ENCODE measurements at regions of chr15 and their contacts with region 1.

Region 1: DNA sequence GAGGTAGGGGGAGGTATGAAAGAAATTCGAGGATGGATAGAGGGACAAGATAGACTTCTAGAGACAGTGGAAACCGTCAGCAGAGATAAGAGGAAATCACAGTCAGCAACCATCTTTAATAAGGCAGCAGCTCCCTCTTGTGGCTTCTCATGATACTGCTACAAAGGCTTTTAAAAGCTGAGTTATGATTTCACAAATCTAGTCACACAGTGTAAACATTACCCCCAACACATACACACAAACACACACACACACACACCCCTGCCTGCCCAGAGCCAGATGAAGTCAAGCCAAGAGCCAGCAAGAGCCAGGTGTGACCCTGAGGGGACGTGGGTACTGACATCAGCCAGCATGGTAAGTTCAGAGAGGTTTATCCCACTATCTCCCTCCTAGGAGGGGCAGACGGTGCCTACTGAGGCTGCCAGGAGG is 18.9 kb upstream of the TGM5 start:
- ATAC-seq: peak; percentile 47 to 88 (median 64)
- H3K4me3 ChIP-seq: no peak overlapping the region
- H3K27ac ChIP-seq: no peak overlapping the region
- H3K4me1 ChIP-seq: no peaks in the 10 kb centered on the region

Region 2: DNA sequence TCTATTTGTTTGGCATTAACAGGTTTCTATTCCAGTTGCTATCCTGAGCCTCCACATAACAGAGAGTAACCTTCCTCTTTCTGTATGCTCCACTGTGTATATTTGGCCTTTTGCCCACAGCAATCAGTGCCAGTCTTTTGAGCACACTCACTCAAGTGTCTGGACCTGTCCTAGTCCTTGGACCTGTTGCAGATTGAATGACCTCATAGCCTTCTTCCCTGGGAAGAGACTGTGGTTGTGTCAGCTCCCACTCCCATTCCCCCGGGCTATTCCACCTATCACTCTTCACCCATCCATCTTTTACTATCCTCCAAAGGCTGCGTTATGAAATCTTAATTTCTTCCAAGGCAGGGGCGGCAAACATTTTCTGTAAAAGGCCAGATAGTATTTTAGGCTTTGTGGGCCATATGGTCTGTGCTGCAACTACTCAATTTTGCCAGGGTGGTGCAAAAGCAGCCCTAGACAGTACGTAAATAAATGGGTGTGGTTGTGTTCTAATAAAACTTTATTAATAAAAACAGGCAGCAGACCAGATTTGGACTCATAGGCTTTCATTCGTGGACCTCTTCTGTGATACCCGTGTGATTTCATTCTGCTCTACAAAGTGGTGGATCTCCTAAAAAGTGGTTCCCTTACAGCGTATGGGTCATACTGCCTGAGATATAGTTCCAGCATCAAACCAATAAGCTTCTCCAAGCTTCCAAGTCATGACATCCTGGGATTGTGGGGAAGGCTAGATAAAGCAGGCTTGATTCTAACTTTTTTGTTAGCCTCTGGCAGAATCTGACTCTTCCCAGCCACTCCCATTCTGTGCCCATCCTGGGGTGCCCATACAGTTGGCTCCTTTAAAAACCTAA is 606.1 kb before region 1 on chr15:
- in situ Hi-C with region 1: loop called in 1 of 9 experiments (anchors 25 kb)
- ATAC-seq: no peak
- H3K4me3 ChIP-seq: no peak overlapping the region
- H3K27ac ChIP-seq: no peak overlapping the region
- H3K4me1 ChIP-seq: no peaks in the 10 kb centered on the region

Region 3: DNA sequence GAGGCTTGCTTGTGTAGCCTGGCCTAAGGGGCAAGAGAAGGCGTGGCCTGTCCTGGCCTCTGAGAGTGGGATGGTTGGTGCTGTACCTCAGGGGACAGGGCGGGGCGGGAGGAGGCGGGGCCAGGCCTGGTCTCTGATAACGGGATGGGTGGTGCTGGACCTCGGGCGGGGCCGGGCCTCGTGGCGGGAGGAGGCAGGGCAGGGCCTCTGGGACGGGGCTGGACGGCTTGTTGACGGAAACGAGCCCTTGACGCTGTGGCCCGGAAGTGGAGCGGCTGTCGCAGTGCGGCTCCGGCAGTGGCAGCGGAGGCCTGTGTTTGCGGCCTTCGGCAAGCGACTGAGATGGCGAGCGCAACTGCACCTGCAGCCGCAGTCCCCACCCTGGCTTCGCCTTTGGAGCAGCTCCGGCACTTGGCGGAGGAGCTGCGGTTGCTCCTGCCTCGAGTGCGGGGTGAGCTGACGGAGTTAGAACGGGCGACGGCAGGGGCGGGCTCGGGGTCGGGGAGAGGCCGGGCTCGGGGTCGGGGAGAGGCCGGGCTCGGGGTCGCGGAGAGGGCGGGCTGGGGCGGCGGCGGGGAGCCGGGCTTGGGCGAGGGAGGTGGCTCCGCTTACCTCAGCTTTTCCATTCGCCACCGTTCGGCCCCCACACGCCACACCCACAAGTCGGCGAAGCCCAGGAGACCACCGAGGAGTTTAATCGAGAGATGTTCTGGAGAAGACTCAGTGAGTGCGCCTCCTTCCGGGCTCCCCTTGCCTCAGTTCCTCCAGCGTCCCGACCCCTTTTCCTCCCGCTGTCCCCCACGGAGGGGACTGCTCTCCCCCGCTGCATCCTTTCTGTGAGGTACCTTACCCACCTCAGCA is 100.2 kb before region 1 on chr15 and contains the start of gene CCNDBP1:
- in situ Hi-C with region 1: loop called in 2 of 9 experiments (anchors 25 kb)
- ATAC-seq: peak; percentile 92 to 97 (median 95)
- H3K4me3 ChIP-seq: peak within 1 kb of the TSS; percentile 46 to 67 (median 58)
- H3K27ac ChIP-seq: peak within 1 kb of the TSS; percentile 45 to 87
- H3K4me1 ChIP-seq: peaks cover 0 to 10% of the 10 kb centered on the region in 2 donors
- total RNA-seq, gene CCNDBP1: 21.2 to 62.7 (median 33.3) TPM

Measured in motor neuron (in vitro differentiated cells).